Activated CD8-positive, alpha-beta memory T cell treated with anti-CD3 and anti-CD28 coated beads, Interleukin-2, amount 10 ng/mL, durations not matched to agents 7 days and 5 days (primary cell): ENCODE measurements at regions of chr4 and their contacts with region 1.

Region 1: GRCh38 chr4:122758033-122758432 is 25.5 kb downstream of the BBS12 start:
- DNase-seq: no peak
- ATAC-seq: no peak
- H3K4me3 Mint-ChIP-seq: no peak overlapping the region
- H3K27ac Mint-ChIP-seq: no peak overlapping the region
- H3K4me1 Mint-ChIP-seq: peaks cover 25% of the 10 kb centered on the region
- H3K27me3 Mint-ChIP-seq: peaks cover 31% of the 10 kb centered on the region

Region 2: GRCh38 chr4:122914292-122914904 is 156.4 kb after region 1 on chr4:
- CTCF ChIA-PET with region 1: interaction called, 19 read pairs
- DNase-seq: no peak
- ATAC-seq: peak; percentile 23
- H3K4me3 Mint-ChIP-seq: no peak overlapping the region
- H3K27ac Mint-ChIP-seq: no peak overlapping the region
- H3K4me1 Mint-ChIP-seq: peaks cover 5% of the 10 kb centered on the region
- H3K27me3 Mint-ChIP-seq: no peaks in the 10 kb centered on the region

Region 3: DNA sequence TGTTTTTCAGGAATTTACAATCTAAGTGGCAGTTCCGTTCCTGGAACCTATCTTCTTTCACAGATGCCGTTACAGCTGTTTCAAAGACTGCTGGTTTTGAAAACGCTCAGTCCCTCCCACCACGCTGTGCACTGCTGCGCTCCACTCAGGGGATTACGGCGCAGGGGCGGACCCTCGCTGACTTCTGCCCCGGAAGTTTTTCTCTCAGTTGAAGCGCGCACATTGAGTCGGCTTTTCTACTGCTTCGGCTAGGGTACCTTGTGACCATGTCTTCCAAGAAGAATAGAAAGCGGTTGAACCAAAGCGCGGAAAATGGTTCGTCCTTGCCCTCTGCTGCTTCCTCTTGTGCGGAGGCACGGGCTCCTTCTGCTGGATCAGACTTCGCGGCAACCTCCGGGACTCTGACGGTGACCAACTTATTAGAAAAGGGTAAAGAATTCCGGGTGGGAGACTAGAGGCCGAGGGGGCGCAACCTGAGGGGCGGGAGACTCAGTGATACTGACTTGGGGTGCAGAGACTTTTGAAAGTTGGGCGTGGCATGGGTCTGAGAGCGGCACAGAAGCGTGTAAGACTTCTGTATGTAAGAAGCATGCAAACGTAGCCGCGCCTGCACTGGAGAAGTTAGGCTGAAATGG is 165.0 kb after region 1 on chr4:
- CTCF ChIA-PET with region 1: interaction called, 19 read pairs
- DNase-seq: peak; percentile 95
- ATAC-seq: peak; percentile 96
- H3K4me3 Mint-ChIP-seq: no peak overlapping the region
- H3K27ac Mint-ChIP-seq: peak overlapping the region; percentile 99
- H3K4me1 Mint-ChIP-seq: peaks cover 19% of the 10 kb centered on the region
- H3K27me3 Mint-ChIP-seq: no peaks in the 10 kb centered on the region

Region 4: DNA sequence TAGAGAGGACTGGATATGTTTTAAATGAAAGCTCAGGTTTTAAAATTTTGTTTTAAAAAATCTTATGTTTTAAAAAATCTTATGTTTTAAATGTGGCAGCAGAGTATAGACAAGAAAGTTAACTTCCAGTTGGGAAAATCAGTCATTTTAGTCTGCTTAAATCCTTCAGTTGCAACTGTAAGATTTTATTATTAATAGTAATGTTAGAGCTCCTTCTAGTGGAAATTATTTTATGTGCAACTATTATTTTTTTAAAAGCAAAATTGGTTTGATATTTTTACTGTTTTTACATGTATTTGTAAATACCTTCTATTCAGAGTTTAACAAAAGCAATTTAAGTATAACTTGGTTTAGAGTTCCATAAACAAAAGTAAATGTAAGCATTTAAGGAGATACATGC is 172.8 kb after region 1 on chr4:
- CTCF ChIA-PET with region 1: interaction called, 20 read pairs
- DNase-seq: no peak
- ATAC-seq: no peak
- H3K4me3 Mint-ChIP-seq: no peak overlapping the region
- H3K27ac Mint-ChIP-seq: no peak overlapping the region
- H3K4me1 Mint-ChIP-seq: peaks cover 28% of the 10 kb centered on the region
- H3K27me3 Mint-ChIP-seq: no peaks in the 10 kb centered on the region